ENCODE measurements at regions of chr6 and their contacts with region 1.

Region 1: DNA sequence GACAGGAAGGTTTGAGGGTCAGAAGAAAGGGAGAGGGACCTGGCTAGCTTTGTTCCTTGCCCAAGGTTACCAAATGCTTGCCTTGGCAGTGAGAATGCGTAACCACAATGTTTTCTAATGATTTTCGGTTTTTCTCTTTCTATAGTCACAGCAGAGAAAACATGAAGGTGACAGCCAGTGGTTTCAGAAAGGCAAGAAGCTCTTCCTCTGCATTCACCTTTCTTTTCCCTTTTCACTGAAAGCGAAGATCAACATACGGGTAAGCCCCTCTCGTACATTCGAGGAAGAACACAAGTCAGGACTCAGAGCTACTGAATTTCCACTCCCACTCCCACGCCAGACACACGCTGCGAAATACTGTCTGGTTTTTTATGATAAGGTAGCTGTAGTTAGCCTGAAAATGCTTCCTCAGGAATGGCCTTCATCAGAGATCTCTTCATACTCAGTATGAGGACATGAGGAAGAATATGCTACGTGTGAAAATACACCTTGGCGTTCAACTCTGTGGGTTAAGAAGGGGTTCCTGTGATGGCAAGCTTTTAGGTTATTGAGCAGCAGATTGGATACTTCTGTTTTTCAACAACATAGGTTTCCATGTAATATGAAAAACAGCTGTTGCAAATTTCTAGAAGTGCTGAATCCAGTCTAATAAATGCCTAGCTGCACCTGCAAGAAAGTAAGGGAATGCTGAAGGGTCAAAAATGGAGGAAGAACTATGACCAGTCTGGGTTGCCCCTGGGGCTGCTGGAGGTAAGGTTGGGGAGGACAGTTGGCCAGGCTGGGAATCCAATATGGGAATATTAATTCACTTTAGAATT is 7.4 kb upstream of the CD83 start:
- DNase-seq: no peak
- ATAC-seq: no peak
- H3K4me3 ChIP-seq: no peak overlapping the region
- H3K27ac ChIP-seq: no peak overlapping the region
- H3K4me1 ChIP-seq: no peaks in the 10 kb centered on the region
- H3K27me3 ChIP-seq: peaks cover 3 to 12% (median 4%) of the 10 kb centered on the region in 3 donors
- CTCF ChIP-seq: no peak

Region 2: DNA sequence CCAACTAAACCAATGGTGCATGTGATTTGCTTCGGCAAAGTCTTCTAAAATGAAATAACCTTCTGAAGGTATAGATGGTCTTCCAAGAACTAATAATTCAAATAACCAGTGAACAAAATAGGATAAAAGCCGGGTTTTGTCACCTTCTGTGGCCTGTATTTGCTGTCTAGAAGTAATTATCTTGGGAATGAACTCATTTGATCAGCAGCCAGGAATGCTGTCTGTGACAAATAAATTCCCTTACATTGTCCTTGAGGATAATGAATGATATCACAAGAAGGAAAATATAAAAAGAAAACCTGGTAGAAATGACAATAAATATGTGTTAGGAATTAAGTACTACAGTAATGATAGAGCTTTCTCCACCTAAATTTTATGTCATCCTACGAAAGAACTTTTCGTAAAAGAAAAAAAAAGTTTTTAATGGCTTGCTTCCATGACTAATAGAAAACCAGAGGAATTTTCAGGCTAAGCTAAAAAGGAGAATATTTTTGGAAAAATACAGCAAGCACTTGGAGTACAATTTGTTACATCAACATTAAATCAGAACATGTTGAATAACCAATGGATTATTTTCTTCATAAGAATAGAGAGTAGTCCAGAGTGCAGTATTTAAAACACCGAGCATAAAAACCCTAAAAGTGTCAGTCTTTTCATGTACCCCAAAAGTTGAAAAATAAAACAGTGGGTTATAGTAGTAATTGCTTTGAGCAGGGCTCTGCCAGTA is 1029.6 kb before region 1 on chr6:
- intact Hi-C with region 1: loop called in 1 of 2 experiments (anchors 5 kb)
- DNase-seq: no peak
- ATAC-seq: no peak
- H3K4me3 ChIP-seq: no peak overlapping the region
- H3K27ac ChIP-seq: no peak overlapping the region
- H3K4me1 ChIP-seq: no peaks in the 10 kb centered on the region
- H3K27me3 ChIP-seq: peaks cover 0 to 6% (median 0%) of the 10 kb centered on the region in 3 donors
- CTCF ChIP-seq: no peak

Region 3: DNA sequence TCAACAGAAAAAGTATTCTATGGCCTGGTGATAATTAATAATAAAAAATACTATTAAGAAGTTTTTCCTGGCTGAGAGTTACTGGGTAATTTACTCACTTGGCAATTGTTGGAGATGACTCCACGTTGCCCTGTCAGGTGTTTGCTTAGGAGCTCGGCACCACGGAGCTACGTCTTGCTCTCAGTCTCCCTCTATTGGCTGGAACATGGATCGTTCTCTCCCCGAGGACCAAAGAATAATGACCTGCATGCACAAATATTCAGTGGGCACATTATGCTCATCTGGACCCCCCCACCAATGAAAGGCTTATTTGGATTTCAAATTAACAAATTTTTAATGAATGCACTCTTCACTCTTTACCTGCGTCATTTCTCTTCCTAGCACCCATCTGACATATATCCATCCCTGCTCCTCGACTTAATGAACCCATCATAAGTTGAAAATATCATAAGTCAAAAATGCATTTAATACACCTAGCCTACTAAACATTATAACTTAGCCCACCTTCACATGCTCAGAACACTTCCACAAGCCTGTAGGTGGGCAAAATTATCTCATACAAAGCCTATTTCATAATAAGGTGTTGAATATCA is 63.6 kb before region 1 on chr6:
- intact Hi-C with region 1: no loop called
- DNase-seq: no peak
- ATAC-seq: peak in 1 of 4 donors; percentile 63
- H3K4me3 ChIP-seq: no peak overlapping the region
- H3K27ac ChIP-seq: no peak overlapping the region
- H3K4me1 ChIP-seq: no peaks in the 10 kb centered on the region
- H3K27me3 ChIP-seq: peaks cover 0 to 18% (median 0%) of the 10 kb centered on the region in 3 donors
- CTCF ChIP-seq: peak; percentile 43

Region 4: DNA sequence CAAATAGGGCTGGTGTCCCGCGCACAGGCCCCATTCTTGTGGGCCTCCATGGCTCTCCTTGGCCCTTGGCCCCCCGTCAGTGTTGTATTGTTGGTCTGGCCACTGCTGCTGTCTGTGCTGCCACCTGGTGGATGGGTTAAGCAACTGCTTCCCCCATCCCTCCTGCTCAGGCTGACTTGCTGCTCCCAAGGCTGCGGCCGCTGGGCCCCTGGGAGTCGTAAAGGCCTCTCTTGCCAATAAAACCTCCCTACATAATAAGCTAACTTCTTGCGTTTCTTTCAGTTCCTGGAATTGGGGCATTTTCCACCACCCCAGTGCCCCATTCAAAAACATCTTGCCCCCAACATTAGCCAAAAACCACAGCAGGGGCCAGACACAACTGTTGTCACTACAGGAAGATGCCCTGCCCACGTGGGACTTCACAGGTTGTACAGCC is 34.5 kb after region 1 on chr6:
- intact Hi-C with region 1: no loop called
- DNase-seq: peak; percentile 50 to 81
- ATAC-seq: peak; percentile 76 to 91 (median 86)
- H3K4me3 ChIP-seq: no peak overlapping the region
- H3K27ac ChIP-seq: no peak overlapping the region
- H3K4me1 ChIP-seq: peaks cover 12% of the 10 kb centered on the region
- H3K27me3 ChIP-seq: peaks cover 0 to 6% (median 1%) of the 10 kb centered on the region in 3 donors
- CTCF ChIP-seq: peak; percentile 87

Measured in psoas muscle (tissue), 8 donors.